Thyroid gland (tissue), 4 donors: ENCODE measurements at regions of chr13 and their contacts with region 1.

Region 1: DNA sequence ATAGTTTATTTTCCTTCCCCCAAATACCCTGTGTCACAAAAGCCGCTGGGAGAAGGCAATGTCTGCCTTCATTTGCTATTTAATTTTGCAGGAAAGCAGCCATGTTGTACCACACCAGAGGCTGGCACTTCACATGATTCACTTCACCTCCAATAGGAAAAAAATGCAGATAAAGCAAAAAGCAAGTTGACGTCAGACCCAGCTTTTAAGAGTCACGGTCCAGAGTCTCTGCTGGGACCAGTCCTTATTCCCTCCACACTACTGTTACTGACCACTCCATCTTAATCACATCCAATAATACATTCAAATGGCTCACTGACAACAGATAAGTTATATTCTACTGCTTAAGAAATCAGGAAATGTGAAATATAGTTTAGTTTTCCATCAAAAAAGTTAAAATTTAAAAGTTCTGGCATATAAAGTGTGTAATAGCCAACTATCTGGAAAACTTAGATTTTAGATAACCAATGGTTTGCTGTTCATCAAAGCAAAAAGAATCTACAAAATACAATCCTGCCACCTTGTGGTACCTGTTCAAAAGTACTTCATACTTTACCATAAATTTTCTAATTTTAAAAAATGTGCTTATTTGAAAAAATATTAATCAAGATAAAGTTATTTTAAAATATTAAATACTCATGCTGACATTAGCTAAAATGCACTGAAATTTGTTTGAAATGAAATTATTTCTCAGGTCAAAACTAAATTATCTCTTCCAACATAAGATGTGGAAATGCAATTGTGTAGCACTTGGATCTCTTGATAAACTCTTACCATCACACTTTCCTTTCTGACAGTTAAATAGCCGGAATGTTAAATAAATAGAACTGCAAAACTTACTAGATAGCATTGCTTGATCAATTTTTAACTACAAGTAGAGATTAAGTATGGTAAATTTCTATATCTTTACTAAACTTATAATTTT is 97.3 kb downstream of the SERP2 start:
- DNase-seq: no peak
- H3K4me3 ChIP-seq: no peak overlapping the region
- H3K27ac ChIP-seq: no peak overlapping the region
- H3K4me1 ChIP-seq: peaks cover 0 to 8% of the 10 kb centered on the region in 2 donors
- H3K27me3 ChIP-seq: no peaks in the 10 kb centered on the region
- CTCF ChIP-seq: peak in 5 of 6 experiments; percentile 8 to 66 (median 60)
- POLR2A ChIP-seq: no peak

Region 2: GRCh38 chr13:43905435-43906031 is 565.4 kb before region 1 on chr13:
- intact Hi-C with region 1: loop called (anchors 5 kb)
- DNase-seq: peak; percentile 13 to 14
- H3K4me3 ChIP-seq: no peak overlapping the region
- H3K27ac ChIP-seq: no peak overlapping the region
- H3K4me1 ChIP-seq: no peaks in the 10 kb centered on the region
- H3K27me3 ChIP-seq: no peaks in the 10 kb centered on the region
- CTCF ChIP-seq: peak; percentile 44 to 92 (median 76)
- POLR2A ChIP-seq: no peak

Region 3: GRCh38 chr13:45297456-45298205 is 826.7 kb after region 1 on chr13:
- intact Hi-C with region 1: no loop called
- DNase-seq: no peak
- H3K4me3 ChIP-seq: no peak overlapping the region
- H3K27ac ChIP-seq: no peak overlapping the region
- H3K4me1 ChIP-seq: peaks cover 5 to 19% of the 10 kb centered on the region in 2 donors
- H3K27me3 ChIP-seq: no peaks in the 10 kb centered on the region
- CTCF ChIP-seq: no peak
- POLR2A ChIP-seq: no peak